Heart right ventricle (tissue), 16 donors: ENCODE measurements at regions of chr11 and their contacts with region 1.

Region 1: DNA sequence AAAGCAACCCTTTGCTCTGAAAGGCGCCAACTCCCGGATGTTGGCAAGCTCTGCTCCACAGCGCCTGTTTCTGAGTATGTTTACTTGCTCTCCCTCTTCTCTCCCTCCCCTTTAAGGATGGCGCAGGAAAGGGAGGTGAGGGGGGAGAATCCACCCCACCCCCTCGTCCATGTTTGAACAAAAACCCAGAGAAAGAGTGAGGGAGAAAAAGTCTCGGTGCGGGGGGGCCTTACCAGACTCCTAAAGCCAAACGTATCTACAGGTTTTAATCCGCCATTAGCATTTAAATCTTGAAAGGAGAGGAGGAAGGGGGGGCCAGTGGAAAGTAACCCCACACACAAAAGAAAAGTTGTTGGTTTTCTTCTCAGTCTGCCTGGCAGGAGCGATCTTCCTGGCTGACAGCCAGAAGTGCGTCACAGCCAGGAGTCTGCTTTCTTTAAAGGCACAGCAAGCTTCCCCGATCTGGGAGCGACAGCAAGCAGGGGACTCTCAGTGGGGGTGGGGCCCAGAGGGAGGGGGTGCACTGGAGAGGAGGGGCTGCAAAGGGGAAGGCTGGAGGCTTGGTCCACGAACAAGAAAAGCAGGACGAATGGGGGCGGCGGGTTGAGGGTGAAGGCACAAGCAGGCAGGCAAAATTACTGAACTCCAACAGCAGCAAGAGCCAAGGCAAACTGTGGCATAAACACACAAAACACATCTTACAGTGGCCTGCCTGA is 39.5 kb downstream of the NUMA1 start:
- DNase-seq: peak; percentile 95 to 96
- ATAC-seq: peak; percentile 82 to 91 (median 86)
- H3K4me3 ChIP-seq: peak overlapping the region; percentile 42 to 80 (median 64)
- H3K27ac ChIP-seq: peak overlapping the region; percentile 92 to 99 (median 96)
- H3K4me1 ChIP-seq: peaks cover 24 to 66% (median 54%) of the 10 kb centered on the region in 9 donors
- H3K27me3 ChIP-seq: no peaks in the 10 kb centered on the region
- CTCF ChIP-seq: no peak

Region 2: DNA sequence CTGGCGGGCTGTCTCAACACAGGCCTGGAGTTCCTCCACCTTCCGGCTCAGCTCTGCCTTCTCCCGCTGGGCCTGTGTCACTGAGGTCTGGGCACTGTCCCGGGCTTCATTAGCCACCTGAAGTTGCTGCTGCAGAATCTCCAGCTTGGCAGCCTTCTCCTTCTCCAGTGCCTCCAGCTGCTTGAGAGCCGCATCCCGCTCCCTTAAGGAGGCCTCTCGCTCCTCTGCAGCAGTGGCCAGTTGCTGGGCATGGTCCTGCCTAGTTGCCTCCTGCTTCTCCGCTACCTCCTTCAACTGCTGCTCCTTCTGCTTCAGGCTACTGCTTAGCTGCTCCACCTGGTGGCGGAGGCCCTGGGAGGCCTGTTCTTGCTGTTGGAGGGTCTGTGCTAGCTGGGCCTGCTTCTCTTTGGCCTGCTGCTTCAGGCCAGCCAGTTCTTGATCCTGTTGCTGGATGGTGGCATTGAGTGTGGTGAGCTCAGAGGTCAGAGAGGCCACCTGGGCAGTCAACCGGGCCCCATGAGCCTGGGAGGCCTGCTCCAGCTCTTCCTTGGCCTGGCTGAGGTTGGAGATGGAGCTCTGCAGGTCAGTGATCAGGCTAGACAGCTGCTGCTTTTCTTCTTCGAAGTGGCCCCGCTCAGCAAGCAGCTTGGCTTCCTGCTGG is 25.2 kb before region 1 on chr11:
- intact Hi-C with region 1: loop called in 1 of 10 experiments (anchors 1 kb)
- DNase-seq: no peak
- ATAC-seq: no peak
- H3K4me3 ChIP-seq: no peak overlapping the region
- H3K27ac ChIP-seq: no peak overlapping the region
- H3K4me1 ChIP-seq: peaks cover 33 to 47% (median 37%) of the 10 kb centered on the region in 9 donors
- H3K27me3 ChIP-seq: no peaks in the 10 kb centered on the region
- CTCF ChIP-seq: peak in 6 of 9 donors; percentile 11 to 33 (median 16)

Region 3: DNA sequence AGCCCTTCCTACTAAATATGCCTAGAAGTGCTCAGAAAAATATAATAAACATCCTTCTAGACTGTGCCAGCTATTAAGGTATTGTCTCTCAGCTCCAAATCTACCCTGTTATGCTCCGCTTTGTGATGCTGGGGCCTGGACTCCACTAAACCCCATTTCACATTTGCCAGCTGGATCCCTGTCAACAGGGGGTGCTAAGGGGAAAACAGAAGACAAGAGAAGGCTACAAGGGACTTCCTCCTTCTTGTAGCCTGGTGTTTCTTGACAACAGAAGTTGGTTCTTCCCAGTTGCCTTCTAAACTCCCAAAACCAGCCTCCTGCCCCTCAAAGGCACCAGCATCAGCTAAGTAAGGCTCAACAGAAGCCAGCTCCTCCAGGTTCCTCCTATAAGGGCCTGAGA is 34.2 kb after region 1 on chr11:
- intact Hi-C with region 1: loop called in 8 of 10 experiments (anchors 1 to 5 kb)
- DNase-seq: no peak
- ATAC-seq: no peak
- H3K4me3 ChIP-seq: peak overlapping the region in 1 of 10 donors; percentile 15
- H3K27ac ChIP-seq: peak overlapping the region in 1 of 10 donors; percentile 76
- H3K4me1 ChIP-seq: peaks cover 0 to 54% (median 17%) of the 10 kb centered on the region in 9 donors
- H3K27me3 ChIP-seq: no peaks in the 10 kb centered on the region
- CTCF ChIP-seq: peak in 1 of 9 donors; percentile 27

Region 4: GRCh38 chr11:72080256-72080974 is 39.5 kb after region 1 on chr11 and contains the starts of genes LRRC51 and NUMA1:
- intact Hi-C with region 1: loop called in 8 of 10 experiments (anchors 1 to 5 kb)
- DNase-seq: peak; percentile 97 to 100
- ATAC-seq: peak; percentile 97 to 99 (median 98)
- H3K4me3 ChIP-seq: peak within 1 kb of the TSS; percentile 43 to 89 (median 74)
- H3K27ac ChIP-seq: peak within 1 kb of the TSS; percentile 67 to 95 (median 87)
- H3K4me1 ChIP-seq: peaks cover 0 to 40% (median 15%) of the 10 kb centered on the region in 9 donors
- H3K27me3 ChIP-seq: no peaks in the 10 kb centered on the region
- CTCF ChIP-seq: no peak
- total RNA-seq, gene LRRC51: 2.3 to 9.1 (median 4.7) TPM
- total RNA-seq, gene NUMA1: 60.8 to 117 (median 83.4) TPM

Region 5: GRCh38 chr11:72112321-72113219 is 71.7 kb after region 1 on chr11 and contains the start of gene ANAPC15:
- intact Hi-C with region 1: loop called in 1 of 10 experiments (anchors 2 kb)
- DNase-seq: peak; percentile 93 to 100
- ATAC-seq: peak; percentile 94 to 98 (median 96)
- H3K4me3 ChIP-seq: peak within 1 kb of the TSS; percentile 37 to 84 (median 58)
- H3K27ac ChIP-seq: peak within 1 kb of the TSS; percentile 88 to 100 (median 96)
- H3K4me1 ChIP-seq: peaks cover 4 to 21% (median 15%) of the 10 kb centered on the region in 9 donors
- H3K27me3 ChIP-seq: peaks cover 0 to 10% (median 0%) of the 10 kb centered on the region in 7 donors
- CTCF ChIP-seq: peak in 2 of 9 donors; percentile 11 to 16
- total RNA-seq, gene ANAPC15: 31.8 to 58.3 (median 46.8) TPM

Region 6: DNA sequence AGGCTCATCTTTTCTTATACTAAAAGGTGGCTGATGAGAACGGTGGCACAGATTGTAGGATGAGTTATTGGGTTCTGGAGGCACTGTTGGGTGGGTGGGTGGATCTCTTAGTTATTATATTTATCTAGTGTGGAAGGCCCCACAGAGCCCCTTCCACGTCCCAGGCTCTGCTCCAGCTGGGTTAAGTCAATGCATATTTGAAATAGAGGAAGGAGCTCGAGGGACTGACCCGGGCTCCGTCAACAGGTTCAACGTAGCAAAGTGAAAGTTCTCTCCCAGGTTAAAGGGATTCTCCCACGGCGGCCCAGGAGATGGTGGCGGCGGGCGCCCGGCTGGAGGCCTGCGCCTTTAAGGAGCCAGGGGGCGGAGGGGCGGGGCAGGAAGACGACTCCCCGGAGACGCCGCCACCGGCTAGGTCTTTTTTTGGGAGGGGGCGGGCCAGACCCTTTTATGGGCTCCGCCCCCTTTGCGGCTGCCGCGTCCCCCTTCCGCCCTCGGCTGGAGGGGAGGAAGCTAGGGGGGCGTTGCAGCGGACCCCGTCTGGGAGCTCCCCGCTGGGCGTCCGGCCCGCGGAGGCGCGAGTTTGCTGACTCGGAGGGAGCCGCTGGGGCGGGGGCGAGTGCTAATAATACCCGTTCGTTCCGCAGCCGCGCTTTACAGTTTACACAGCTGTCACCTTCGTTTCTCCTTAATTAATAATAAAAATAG is 182.2 kb after region 1 on chr11:
- intact Hi-C with region 1: no loop called
- DNase-seq: peak; percentile 95 to 96
- ATAC-seq: peak; percentile 89 to 96 (median 93)
- H3K4me3 ChIP-seq: peak overlapping the region; percentile 57 to 94 (median 84)
- H3K27ac ChIP-seq: peak overlapping the region; percentile 94 to 100 (median 99)
- H3K4me1 ChIP-seq: peaks cover 5 to 55% (median 21%) of the 10 kb centered on the region in 9 donors
- H3K27me3 ChIP-seq: peaks cover 0 to 5% (median 0%) of the 10 kb centered on the region in 7 donors
- CTCF ChIP-seq: peak in 8 of 9 donors; percentile 21 to 67 (median 52)